MCF 10A (cell line): ENCODE measurements at regions of chr5 and their contacts with region 1.

Region 1: DNA sequence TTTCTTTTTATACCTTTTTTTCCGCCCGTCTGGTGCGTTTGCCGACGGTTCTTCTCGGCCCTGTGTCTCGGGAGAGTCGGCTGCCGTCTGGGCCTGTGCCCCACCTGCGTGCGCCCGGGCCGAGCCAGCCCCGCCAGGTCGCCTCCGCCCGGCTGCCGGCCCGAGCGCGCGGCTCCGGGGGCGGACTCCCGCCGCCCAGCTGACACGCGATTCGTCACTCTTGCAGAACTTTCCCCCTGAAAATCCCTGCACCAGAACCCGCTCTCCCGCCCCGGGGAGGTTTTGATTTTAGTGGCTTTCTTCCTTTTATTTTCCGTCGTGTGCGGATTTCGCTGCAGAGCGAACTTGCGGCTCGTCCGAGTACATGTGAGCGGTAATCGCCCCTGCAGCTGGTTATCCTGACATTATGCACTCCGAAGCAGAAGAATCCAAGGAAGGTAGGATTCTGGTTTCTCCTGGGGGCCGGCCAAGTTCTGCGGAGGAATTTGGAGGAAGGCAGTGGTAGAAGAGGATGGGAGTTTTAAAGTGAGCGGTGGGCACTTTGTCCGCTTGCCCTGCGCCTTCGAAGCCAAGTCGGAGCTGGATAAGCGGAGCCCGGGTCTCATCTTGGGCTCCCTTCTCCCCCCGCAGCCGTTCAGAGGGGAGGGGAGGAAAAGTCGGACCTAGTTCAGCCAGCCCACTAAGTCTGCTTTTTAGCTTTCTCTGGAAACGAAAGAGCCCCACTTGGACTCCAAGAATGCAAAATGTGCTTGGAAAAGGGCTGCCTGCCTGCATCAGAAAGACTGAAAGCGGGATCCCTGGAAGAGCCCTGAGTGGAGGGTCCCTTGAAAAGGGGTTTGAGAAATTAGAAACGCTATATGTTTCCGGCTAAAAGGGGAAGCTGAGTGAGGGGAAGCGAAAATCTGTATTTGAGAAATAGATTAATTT is at the start of gene TNFAIP8:
- DNase-seq: peak; percentile 73
- H3K4me3 Mint-ChIP-seq: peak within 1 kb of the TSS; percentile 95
- H3K27ac Mint-ChIP-seq: peak within 1 kb of the TSS; percentile 79
- H3K4me1 Mint-ChIP-seq: peaks cover 44% of the 10 kb centered on the region
- H3K27me3 Mint-ChIP-seq: no peaks in the 10 kb centered on the region
- CTCF ChIP-seq: no peak
- total RNA-seq, gene TNFAIP8: 13.0 and 16.2 TPM in 2 replicates

Region 2: GRCh38 chr5:119267958-119268386 is 88.0 kb before region 1 on chr5:
- CTCF ChIA-PET with region 1: interaction called, 5 read pairs
- POLR2A ChIA-PET with region 1: interaction called, 41 read pairs
- intact Hi-C with region 1: loop called (anchors 1 kb)
- DNase-seq: peak; percentile 99
- H3K4me3 Mint-ChIP-seq: peak overlapping the region; percentile 86
- H3K27ac Mint-ChIP-seq: peak overlapping the region; percentile 81
- H3K4me1 Mint-ChIP-seq: peaks cover 17% of the 10 kb centered on the region
- H3K27me3 Mint-ChIP-seq: no peaks in the 10 kb centered on the region
- CTCF ChIP-seq: peak; percentile 55

Region 3: DNA sequence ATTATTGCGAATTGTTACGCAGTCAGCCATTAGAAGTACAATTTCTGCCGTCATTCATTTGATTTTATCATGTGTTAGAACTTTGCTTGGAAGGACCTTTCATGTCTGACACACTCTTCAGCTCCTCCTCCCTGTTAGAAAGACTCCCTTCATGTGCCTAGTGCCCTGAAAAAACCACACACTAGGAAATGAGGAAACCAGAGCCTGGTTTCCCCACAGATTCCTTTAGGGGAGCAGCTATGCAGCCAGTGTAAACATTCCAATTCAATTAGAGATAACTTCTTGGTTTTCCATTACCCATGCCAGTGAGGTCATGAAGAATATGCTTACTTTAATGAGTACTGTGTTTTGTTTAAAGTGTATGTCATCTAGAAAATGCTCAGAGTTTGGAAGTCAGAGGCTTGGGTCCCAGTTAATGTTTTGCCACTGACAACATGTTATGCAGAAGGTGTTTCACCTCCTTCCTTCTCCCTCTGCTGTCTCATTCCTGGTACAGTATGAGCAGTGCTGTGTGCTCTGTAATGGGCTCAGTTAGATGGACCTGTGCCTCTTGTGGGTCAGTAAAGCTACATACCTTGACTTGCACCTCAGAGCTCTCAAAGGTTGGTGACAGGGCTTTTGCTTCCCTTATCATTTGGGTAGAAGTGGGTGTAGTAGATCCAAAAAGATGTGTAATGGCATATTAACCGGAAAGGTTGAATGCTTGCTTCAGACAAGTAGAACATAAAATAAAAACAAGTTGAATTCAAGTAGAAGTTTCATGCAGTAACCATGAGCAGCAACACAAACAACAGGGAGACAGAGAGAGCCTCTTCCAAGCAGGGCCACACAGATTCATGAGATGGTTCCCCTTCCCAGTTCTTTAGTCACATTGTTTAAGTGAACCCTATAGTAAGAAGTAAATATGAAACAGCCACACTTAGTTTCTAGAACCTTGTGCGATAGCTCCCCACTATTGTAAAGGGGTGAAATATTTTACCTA is 52.7 kb before region 1 on chr5:
- CTCF ChIA-PET with region 1: interaction called, 4 read pairs
- POLR2A ChIA-PET with region 1: interaction called, 24 read pairs
- intact Hi-C with region 1: no loop called
- DNase-seq: peak; percentile 94
- H3K4me3 Mint-ChIP-seq: peak overlapping the region; percentile 52
- H3K27ac Mint-ChIP-seq: peak overlapping the region; percentile 91
- H3K4me1 Mint-ChIP-seq: peaks cover 33% of the 10 kb centered on the region
- H3K27me3 Mint-ChIP-seq: no peaks in the 10 kb centered on the region
- CTCF ChIP-seq: no peak

Region 4: DNA sequence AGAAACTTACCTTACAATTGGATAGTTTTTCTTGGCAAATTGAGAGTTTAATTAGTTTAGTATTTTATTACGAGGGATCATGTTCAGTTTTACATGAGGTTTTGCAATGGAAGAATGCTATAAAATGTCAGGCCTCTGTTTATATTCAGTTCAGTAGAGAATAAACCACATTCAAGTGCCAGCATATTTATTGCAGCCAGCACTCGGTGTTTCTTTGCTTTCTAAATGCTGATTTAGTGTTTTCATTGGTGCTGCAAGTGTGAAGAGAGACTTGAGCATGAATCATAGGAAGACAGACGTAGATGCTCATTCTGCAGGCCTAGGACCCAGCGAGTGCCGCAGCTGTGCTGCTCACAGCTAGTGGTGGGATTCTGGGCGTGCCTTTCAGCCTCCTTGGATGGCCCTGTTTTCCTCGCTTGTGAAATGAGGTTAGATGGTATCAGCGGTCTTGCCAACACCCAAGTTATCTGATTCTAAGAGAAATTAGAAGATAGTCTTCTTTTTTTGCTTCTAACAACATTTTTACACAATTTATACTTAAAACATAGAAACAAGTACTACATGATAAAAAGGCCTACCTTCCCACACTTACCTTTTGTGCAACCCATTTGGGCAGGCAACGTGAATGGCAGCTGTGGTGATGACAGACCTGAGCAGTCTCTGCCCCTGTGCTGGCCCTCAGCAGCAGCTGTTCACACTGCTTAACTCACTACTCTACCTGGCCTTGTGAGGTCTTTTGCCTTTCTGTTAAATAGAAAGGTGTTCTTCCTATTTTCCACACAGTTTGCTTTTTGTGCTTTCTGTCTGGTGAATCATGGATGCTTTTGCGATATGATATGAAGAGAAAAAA is 27.0 kb before region 1 on chr5:
- CTCF ChIA-PET with region 1: interaction called, 161 read pairs
- POLR2A ChIA-PET with region 1: interaction called, 385 read pairs
- intact Hi-C with region 1: loop called (anchors 1 kb)
- DNase-seq: peak; percentile 54
- H3K4me3 Mint-ChIP-seq: no peak overlapping the region
- H3K27ac Mint-ChIP-seq: peak overlapping the region; percentile 65
- H3K4me1 Mint-ChIP-seq: peaks cover 55% of the 10 kb centered on the region
- H3K27me3 Mint-ChIP-seq: no peaks in the 10 kb centered on the region
- CTCF ChIP-seq: no peak

Region 5: DNA sequence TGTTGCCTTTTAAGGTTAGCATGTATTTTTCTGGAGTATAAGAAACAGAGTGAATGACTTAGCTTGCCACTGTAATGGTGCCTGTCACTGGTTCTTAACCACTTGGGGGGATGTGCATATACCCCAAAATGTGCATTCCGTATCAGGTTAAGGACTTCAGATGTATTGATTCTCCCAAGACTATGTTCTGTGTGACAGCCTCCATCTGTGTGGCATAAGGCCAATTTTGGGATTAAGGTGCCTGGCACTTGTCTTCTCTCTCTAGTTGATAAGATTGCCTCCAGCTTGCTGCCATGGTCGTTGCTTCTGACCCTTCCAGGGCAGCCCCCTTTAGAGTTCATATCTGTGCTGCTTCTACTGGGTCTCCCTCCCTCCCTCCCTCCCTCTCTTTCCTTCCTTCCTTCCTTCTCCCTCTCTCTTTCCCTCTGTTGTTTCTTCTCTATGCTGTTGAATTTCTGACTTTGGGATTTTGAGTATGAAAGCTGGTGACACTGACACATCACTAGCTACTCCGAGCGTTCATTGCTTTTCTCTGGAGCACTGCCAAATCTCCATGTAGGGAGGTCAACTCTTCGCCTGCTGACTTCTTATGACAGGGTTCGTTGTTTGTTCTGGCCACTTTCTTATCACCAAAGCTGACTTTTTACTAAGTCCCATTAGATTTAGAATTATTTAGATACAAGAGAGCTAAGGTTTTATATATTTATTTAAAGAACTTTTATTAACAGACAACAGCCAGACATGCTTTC is 30.8 kb after region 1 on chr5:
- CTCF ChIA-PET with region 1: interaction called, 5 read pairs
- POLR2A ChIA-PET with region 1: interaction called, 492 read pairs
- intact Hi-C with region 1: no loop called
- DNase-seq: peak; percentile 45
- H3K4me3 Mint-ChIP-seq: no peak overlapping the region
- H3K27ac Mint-ChIP-seq: peak overlapping the region; percentile 76
- H3K4me1 Mint-ChIP-seq: peaks cover 53% of the 10 kb centered on the region
- H3K27me3 Mint-ChIP-seq: no peaks in the 10 kb centered on the region
- CTCF ChIP-seq: no peak

Region 6: DNA sequence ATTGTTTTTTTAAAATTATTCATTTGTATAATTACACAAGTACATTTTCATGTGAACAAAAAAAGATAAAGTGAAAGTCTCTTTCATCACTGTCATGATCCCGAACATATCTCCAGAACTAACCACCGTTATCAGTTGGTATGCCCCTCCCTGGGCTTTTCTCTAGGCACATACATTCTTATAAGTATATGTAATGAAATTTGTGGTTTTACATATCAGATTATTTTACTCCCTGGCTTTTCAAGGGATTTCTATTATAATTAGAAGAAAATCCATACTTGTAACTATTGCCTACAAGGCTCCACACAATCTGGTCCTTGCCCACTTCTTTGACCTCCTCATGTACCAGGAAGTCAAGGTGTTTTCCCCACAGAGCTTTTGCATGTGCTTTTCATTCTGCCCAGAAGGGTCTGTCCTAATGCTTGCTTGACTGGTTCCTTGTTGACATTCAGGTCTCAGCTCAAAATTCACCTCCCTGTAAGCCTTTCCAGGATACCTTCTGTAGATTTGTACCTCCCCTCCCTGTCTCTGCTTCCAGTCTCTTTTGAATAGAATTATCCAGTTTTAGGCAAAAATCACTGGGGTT is 62.7 kb after region 1 on chr5:
- CTCF ChIA-PET with region 1: interaction called, 132 read pairs
- POLR2A ChIA-PET with region 1: interaction called, 174 read pairs
- intact Hi-C with region 1: no loop called
- DNase-seq: no peak
- H3K4me3 Mint-ChIP-seq: no peak overlapping the region
- H3K27ac Mint-ChIP-seq: no peak overlapping the region
- H3K4me1 Mint-ChIP-seq: peaks cover 32% of the 10 kb centered on the region
- H3K27me3 Mint-ChIP-seq: no peaks in the 10 kb centered on the region
- CTCF ChIP-seq: no peak

Region 7: GRCh38 chr5:119554597-119554996 is 198.6 kb after region 1 on chr5:
- CTCF ChIA-PET with region 1: no interaction called
- POLR2A ChIA-PET with region 1: no interaction called
- intact Hi-C with region 1: no loop called
- DNase-seq: no peak
- H3K4me3 Mint-ChIP-seq: no peak overlapping the region
- H3K27ac Mint-ChIP-seq: no peak overlapping the region
- H3K4me1 Mint-ChIP-seq: no peaks in the 10 kb centered on the region
- H3K27me3 Mint-ChIP-seq: no peaks in the 10 kb centered on the region
- CTCF ChIP-seq: no peak

Region 8: DNA sequence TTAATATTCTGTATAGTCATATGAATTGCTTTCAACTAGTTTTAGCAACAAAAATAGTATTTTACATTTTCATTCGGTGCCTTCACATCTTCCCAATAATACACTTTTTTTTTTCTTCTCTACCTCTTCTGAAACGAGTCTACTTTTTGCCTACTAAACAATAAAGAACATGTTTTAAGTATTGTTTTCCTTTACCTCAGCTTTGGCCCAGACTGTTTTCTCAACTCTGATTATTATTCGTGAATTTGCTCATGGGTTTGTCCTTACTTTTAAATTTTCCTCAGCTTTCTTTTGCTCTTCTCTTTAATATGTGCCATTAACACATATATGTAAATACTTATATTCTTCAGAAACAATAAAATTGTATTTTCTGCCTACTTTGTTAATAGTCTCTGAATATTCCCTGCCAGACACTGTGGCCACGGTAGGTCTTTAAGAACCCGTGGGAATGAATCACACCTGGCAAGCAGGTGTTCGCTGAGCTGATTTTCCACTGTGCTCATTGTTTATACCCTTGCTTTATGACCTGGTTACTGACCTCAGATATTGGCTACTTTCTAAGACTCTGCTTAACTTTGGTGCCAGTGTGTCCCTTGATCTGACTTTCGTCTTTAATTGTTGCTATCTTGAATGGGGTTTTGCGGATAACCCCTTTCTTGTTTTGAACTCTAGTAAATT is 322.5 kb after region 1 on chr5:
- CTCF ChIA-PET with region 1: no interaction called
- POLR2A ChIA-PET with region 1: no interaction called
- intact Hi-C with region 1: no loop called
- DNase-seq: no peak
- H3K4me3 Mint-ChIP-seq: no peak overlapping the region
- H3K27ac Mint-ChIP-seq: no peak overlapping the region
- H3K4me1 Mint-ChIP-seq: no peaks in the 10 kb centered on the region
- H3K27me3 Mint-ChIP-seq: no peaks in the 10 kb centered on the region
- CTCF ChIP-seq: no peak